Sigmoid colon (tissue), 7 donors: ENCODE measurements at regions of chr6 and their contacts with region 1.

Region 1: GRCh38 chr6:100116411-100117194 is 122.6 kb upstream of the MCHR2 start:
- DNase-seq: no peak
- H3K4me3 ChIP-seq: no peak overlapping the region
- H3K27ac ChIP-seq: no peak overlapping the region
- H3K4me1 ChIP-seq: no peaks in the 10 kb centered on the region
- H3K27me3 ChIP-seq: no peaks in the 10 kb centered on the region
- CTCF ChIP-seq: peak in 1 of 4 experiments; percentile 40
- EP300 ChIP-seq: no peak
- POLR2A ChIP-seq: no peak

Region 2: DNA sequence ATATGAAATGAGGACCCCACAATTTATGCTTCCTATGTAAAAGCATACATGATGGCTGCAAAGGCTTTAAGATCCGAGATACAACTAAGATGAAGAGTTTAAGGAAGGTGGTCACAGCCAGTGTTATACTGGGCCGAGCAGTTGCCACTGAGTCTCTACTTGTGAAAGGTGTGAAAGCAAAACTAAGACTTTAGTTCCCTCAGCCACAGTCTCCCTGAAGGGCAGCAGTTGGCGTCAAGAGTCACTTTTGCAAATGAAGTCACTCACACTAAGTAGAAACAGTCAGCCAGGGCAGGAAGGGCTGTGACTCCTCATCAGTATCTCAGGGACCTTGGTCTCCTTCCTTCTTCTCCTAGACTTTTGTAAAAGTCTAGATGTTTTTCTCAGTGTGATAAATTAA is 69.0 kb after region 1 on chr6:
- intact Hi-C with region 1: no loop called
- DNase-seq: no peak
- H3K4me3 ChIP-seq: no peak overlapping the region
- H3K27ac ChIP-seq: no peak overlapping the region
- H3K4me1 ChIP-seq: no peaks in the 10 kb centered on the region
- H3K27me3 ChIP-seq: no peaks in the 10 kb centered on the region
- CTCF ChIP-seq: no peak
- EP300 ChIP-seq: no peak
- POLR2A ChIP-seq: no peak

Region 3: GRCh38 chr6:100479179-100480035 is 362.8 kb after region 1 on chr6:
- intact Hi-C with region 1: loop called (anchors 5 kb)
- DNase-seq: no peak
- H3K4me3 ChIP-seq: no peak overlapping the region
- H3K27ac ChIP-seq: no peak overlapping the region
- H3K4me1 ChIP-seq: no peaks in the 10 kb centered on the region
- H3K27me3 ChIP-seq: peaks cover 0 to 11% (median 0%) of the 10 kb centered on the region in 3 donors
- CTCF ChIP-seq: peak in 2 of 4 experiments; percentile 44 to 47
- EP300 ChIP-seq: no peak
- POLR2A ChIP-seq: no peak

Region 4: DNA sequence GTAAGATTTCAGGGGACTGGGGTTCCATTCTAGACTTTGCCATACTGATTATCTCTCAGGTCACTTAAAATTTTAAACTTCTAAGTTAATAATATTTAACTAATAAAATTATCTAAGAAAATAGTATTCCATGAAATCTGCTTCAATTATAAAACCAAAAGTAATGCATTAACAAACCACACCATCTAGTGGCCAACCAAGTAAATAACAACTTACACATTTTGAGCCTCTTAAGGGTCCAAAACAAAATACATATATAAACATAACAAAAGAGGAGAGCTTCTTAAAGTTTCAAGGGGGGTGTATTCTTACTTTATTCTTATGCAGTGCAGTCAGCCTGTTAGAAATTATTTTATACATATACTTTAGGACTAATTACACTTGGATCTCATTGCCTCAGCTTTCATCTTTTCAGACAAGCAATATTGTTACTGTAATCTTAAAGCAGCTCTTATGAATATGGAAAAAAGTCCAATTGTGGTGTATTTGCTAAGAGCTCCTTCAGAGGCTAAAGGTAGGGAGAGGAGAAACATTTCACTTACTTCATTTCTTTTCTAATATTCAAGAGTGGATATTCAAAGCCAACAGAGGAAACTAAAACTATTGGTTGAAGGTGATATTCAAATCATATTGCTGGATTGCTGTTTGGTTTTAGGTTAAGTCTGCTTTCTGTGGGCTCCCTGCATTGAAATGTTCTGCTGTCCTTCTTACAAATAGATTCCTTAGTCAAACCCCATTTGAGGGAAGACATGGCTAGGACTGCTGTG is 547.9 kb after region 1 on chr6:
- intact Hi-C with region 1: loop called (anchors 10 kb)
- DNase-seq: no peak
- H3K4me3 ChIP-seq: no peak overlapping the region
- H3K27ac ChIP-seq: no peak overlapping the region
- H3K4me1 ChIP-seq: no peaks in the 10 kb centered on the region
- H3K27me3 ChIP-seq: no peaks in the 10 kb centered on the region
- CTCF ChIP-seq: peak in 3 of 4 experiments; percentile 34 to 68 (median 54)
- EP300 ChIP-seq: no peak
- POLR2A ChIP-seq: no peak